A549 (cell line): ENCODE measurements at regions of chr20 and their contacts with region 1.

Region 1: DNA sequence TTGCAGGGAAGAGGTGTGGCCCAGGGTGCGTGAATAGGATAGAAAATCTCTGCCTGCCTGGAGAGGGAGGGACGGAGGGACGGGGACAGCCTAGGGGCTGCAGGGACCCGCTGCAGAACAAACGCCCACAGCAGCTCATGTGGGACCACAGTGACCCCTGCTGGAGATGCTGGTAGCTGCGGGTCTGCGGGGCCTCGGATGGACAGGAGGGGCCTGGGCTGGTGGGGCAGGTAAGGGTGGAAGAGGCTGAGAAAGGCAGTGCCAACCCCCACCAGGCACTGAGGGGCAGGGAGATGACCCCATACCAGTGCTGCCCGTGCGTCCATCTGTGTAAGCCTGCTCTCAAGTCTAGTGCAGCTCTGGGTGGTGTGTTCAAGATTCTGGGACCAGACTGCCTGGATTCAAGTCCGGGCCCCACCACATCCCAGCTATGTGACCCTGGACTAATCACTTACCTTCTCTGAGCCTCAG is 39.4 kb downstream of the KIAA1755 start:
- DNase-seq: peak; percentile 73 to 91
- ATAC-seq: peak; percentile 72 to 81
- H3K4me3 ChIP-seq: no peak overlapping the region
- H3K27ac ChIP-seq: peak overlapping the region; percentile 90 to 98
- H3K4me1 ChIP-seq: peaks cover 51% of the 10 kb centered on the region
- CTCF ChIP-seq: peak; percentile 94
- EP300 ChIP-seq: no peak
- POLR2A ChIP-seq: no peak
- RAD21 ChIP-seq: peak; percentile 97 to 99

Region 2: DNA sequence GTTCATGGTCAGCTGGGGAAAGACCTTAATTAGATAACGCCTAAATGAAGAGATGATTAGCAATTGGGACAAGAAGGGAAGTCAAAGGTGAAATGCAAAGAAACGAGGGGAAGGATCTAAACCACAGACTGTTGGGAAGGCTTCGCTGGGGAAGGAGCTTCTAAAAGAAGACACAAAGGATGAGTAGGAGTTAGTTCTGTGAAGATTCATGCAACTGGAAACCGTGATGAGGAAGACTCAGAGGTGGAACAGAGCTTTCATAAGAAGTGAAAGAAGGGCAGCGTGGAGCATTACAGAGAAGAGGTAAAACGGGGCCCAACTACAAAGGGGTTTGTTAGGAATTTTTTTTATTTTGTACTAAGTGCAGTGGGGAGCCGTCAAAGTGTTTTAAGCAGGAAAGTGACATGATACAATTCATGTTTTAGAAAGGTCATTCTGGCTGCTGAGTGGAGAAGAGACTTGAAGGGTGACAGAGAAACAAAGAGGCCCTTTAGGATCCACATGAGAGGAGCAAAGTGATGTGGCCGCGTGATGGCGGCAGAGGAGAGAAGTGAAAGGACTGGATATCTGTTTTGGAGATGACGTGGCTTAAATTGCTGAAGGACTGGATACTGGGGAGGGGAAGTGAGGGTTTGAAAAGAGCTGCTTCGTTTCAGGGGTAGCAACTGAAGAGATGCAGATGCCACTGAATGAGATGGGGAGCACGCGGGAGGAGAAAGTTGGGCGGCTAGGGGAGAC is 221.5 kb before region 1 on chr20:
- CTCF ChIA-PET with region 1: interaction called, 15 read pairs
- POLR2A ChIA-PET with region 1: no interaction called
- DNase-seq: no peak
- ATAC-seq: no peak
- H3K4me3 ChIP-seq: no peak overlapping the region
- H3K27ac ChIP-seq: no peak overlapping the region
- H3K4me1 ChIP-seq: peaks cover 15% of the 10 kb centered on the region
- CTCF ChIP-seq: no peak
- EP300 ChIP-seq: no peak
- POLR2A ChIP-seq: no peak
- RAD21 ChIP-seq: no peak

Region 3: DNA sequence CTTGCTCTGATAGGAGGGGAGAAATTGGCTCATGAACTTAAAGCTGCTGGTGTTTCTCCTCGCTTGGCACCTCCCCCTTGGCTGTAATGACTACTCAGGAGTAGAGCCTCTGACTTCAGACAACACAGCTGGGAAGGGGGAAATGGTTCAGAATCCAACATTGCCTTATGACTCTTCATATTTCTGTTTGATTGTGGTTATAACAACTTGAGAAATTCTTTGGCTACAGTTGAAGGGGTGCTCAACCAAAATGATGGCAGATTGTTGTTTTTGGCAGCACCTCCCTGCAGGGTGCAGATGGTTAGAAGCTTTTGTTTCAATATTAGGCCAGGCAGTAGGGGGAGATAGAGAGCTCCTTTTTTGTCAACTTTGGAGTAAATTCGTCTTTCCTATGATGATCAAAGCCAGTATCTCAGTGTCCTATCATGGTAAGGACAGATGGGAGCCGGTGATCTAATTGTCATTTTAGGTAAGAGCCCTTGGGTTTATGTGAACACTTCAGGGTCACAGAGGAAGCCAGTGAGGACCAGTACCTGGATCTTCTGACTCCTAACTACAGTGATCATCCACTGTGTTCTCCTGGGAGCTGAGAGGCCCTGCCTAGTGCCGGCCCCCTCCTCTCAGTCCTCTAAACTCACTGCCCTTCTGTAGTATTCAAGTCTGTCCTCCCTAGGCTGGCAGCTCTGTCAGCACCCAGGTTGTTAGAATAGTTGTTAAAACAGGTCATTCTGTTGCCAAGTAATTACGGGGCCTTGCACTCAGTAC is 147.7 kb before region 1 on chr20:
- CTCF ChIA-PET with region 1: interaction called, 40 read pairs
- POLR2A ChIA-PET with region 1: interaction called, 5 read pairs
- DNase-seq: peak in 1 of 2 experiments; percentile 22
- ATAC-seq: peak in 1 of 2 experiments; percentile 26; a peak in 1 of 6 replicates
- H3K4me3 ChIP-seq: no peak overlapping the region
- H3K27ac ChIP-seq: no peak overlapping the region
- H3K4me1 ChIP-seq: no peaks in the 10 kb centered on the region
- CTCF ChIP-seq: peak; percentile 46
- EP300 ChIP-seq: no peak
- POLR2A ChIP-seq: no peak
- RAD21 ChIP-seq: peak; percentile 25 to 40; a peak in 4 of 5 replicates

Region 4: DNA sequence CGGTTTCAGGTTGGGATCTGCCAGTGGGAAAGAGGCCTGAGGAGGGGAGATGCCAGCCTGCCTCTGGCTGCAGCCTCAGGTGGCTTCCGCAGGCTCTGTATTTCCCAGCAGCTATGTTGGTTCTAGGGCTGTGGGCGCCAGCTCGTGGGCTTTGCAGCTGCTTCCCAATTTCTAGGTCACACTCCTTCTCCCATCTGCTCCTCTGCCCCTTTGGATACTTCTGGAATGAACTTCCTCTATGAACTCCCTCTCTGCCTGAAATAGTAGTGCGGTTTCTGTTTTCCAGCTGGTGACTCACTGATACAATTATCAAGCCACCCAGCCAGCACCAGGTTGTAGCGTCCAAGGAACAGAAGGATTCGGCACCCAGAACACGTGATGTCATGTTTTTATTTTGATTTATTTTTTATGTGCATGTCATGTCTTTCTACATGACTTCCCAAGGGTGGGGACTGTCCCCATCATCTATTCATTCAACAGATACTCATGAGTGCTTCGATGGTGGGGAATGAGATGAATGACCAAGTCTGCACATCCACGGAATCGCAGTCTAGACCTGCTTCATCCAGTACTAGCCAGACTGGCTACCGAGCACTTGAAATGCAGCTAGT is 94.0 kb before region 1 on chr20:
- CTCF ChIA-PET with region 1: interaction called, 57 read pairs
- POLR2A ChIA-PET with region 1: no interaction called
- DNase-seq: peak; percentile 52 to 58
- ATAC-seq: peak; percentile 39 to 45; a peak in 4 of 6 replicates
- H3K4me3 ChIP-seq: no peak overlapping the region
- H3K27ac ChIP-seq: peak overlapping the region; percentile 61 to 82
- H3K4me1 ChIP-seq: peaks cover 55% of the 10 kb centered on the region
- CTCF ChIP-seq: no peak
- EP300 ChIP-seq: no peak
- POLR2A ChIP-seq: no peak
- RAD21 ChIP-seq: no peak

Region 5: DNA sequence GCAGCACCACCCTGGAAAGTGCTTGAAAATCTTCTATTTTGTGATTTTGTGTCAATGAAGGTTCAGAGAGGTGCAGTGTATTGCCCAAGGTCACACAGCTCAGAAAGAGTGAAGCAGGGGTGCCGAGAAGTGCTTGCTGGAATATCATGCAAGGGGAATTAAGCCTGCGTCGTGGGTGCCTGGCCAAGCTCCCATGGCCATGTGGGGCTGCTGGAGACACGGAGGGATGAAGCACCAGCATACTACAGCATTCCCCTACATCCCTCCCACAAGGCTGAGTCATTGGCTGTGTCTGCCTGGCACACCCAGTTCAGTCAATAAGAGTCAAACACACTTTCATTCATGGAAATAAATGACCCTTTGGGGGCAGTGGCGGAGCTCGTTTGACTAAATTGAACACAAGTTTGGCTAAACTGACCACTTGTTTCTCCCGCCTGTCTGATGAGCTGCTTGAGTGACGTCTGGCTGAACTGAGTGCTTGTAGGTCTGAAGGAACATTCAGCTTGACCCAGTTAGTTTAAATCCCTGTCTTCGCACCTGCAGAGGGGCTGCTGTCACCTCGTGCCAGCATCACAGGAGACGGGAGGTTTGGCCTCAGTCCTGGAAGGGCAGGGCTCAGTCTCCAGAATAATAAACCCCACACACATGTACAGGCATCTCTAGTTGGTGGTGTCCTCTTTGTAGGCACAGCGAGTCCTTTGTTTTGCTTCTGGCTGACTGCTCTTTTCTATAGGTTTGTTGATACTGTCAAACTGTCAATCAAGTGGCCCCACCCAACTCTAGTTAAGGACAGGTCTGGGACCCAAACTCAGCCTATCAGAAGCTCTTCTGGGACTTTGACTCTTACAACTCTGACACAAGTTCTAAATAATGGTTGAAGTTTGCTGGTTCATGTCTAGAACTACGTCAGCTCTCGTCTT is 47.7 kb before region 1 on chr20:
- CTCF ChIA-PET with region 1: interaction called, 818 read pairs
- POLR2A ChIA-PET with region 1: interaction called, 13 read pairs
- DNase-seq: peak; percentile 92 to 95
- ATAC-seq: peak; percentile 85 to 93
- H3K4me3 ChIP-seq: no peak overlapping the region
- H3K27ac ChIP-seq: peak overlapping the region; percentile 91 to 93
- H3K4me1 ChIP-seq: peaks cover 58% of the 10 kb centered on the region
- CTCF ChIP-seq: peak; percentile 45
- EP300 ChIP-seq: peak in 1 of 2 experiments; percentile 51; a peak in 2 of 5 replicates
- POLR2A ChIP-seq: peak; percentile 37; the same call in 1 of the 2 replicates
- RAD21 ChIP-seq: peak; percentile 58 to 75

Region 6: GRCh38 chr20:38210741-38211140 is 10.4 kb before region 1 on chr20:
- CTCF ChIA-PET with region 1: interaction called, 72 read pairs
- POLR2A ChIA-PET with region 1: no interaction called
- DNase-seq: no peak
- ATAC-seq: no peak
- H3K4me3 ChIP-seq: no peak overlapping the region
- H3K27ac ChIP-seq: peak overlapping the region; percentile 67 to 79; a peak in 5 of 6 replicates
- H3K4me1 ChIP-seq: peaks cover 24% of the 10 kb centered on the region
- CTCF ChIP-seq: no peak
- EP300 ChIP-seq: no peak
- POLR2A ChIP-seq: no peak
- RAD21 ChIP-seq: no peak

Region 7: GRCh38 chr20:38298705-38299288 is 77.6 kb after region 1 on chr20:
- CTCF ChIA-PET with region 1: interaction called, 21 read pairs
- POLR2A ChIA-PET with region 1: no interaction called
- DNase-seq: no peak
- ATAC-seq: no peak
- H3K4me3 ChIP-seq: no peak overlapping the region
- H3K27ac ChIP-seq: no peak overlapping the region
- H3K4me1 ChIP-seq: no peaks in the 10 kb centered on the region
- CTCF ChIP-seq: no peak
- EP300 ChIP-seq: no peak
- POLR2A ChIP-seq: no peak
- RAD21 ChIP-seq: no peak